CD8-positive, alpha-beta T cell (primary cell): ENCODE measurements at regions of chr10 and their contacts with region 1.

Region 1: DNA sequence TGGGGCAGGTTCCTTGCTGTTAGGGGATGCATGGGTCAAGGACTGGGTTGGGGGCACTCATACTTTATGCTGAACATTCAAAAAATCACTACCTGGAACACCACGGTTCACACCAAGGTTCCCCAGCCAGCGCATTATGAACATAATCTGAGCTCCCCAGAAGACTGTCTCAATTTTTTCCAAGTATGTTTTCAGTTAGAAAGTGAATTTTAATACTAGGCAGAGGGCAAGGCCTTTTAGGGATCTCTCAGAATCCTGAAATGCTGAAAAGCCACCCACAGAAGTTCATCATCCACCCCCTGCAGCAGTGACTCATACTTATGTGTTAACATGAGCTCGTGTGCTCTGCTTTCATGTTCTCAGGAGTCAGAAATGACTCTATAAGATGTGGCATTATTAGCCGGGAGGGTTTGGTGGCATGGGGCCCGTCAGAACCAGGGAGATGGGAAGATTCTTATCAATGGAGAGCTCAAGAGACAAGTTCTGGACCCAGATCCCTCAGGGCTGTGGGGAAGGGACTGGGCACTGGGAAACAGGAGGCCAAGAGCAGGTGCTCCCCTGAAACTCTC is 185.2 kb upstream of the ITGB1 start:
- DNase-seq: peak in 6 of 9 experiments; percentile 21 to 65 (median 42)
- ATAC-seq: peak; percentile 9
- H3K4me3 ChIP-seq: no peak overlapping the region
- H3K4me3 Mint-ChIP-seq: no peak overlapping the region
- H3K27ac ChIP-seq: no peak overlapping the region
- H3K27ac Mint-ChIP-seq: peak overlapping the region; percentile 55
- H3K4me1 ChIP-seq: peaks cover 33% of the 10 kb centered on the region
- H3K4me1 Mint-ChIP-seq: peaks cover 49% of the 10 kb centered on the region
- H3K27me3 ChIP-seq: no peaks in the 10 kb centered on the region
- H3K27me3 Mint-ChIP-seq: no peaks in the 10 kb centered on the region
- CTCF ChIP-seq: no peak

Region 2: DNA sequence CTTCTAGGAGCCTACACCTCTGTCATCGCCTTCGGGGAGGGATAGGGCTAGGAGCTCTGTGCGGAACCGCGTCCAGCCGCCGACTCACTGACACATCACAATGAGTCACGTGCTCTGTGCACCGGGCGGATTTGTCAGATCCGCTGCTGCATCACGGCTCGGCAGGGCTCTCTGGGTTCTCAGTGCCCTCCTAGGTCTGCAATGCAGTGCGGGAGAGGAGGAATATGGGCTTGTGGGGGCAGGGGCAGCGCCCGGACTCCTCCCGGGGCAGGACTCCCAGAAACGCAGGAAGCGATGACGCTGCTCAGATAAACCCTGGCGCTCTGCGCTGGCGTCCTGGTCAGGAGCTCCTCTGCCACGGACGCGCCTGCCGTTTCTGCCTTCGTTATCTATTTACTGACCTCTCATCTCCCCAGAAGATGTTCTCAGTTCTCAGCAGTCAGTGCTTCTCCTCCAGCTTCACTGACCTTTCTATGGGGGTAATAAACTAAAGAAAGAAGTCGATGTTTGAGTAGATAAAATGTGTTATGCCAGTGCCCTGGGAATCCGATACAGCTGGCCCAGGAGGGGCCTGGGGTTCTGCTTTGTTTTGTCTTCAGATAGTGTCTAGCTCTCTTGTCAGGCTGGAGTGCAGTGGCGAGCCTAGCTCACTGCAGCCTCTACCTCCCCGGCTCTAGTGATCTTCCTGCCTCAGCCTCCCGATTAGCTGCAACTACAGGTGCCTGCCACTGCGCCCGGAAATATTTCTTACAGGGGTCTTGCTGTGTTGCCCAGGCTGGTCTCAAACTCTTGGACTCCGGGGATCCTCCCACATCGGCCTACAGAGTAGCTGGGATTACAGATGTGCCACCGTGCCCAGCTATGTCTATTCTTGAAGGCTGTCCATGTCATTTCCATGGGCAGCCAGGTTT is 162.4 kb before region 1 on chr10:
- CTCF ChIA-PET with region 1: no interaction called
- POLR2A ChIA-PET with region 1: interaction called, 4 read pairs
- intact Hi-C with region 1: loop called in 1 of 2 experiments (anchors 5 kb)
- DNase-seq: peak; percentile 61 to 91 (median 85)
- ATAC-seq: peak; percentile 90
- H3K4me3 ChIP-seq: peak overlapping the region; percentile 52 to 66
- H3K4me3 Mint-ChIP-seq: peak overlapping the region; percentile 96
- H3K27ac ChIP-seq: peak overlapping the region; percentile 68 to 94
- H3K27ac Mint-ChIP-seq: peak overlapping the region; percentile 97
- H3K4me1 ChIP-seq: peaks cover 25% of the 10 kb centered on the region
- H3K4me1 Mint-ChIP-seq: peaks cover 34% of the 10 kb centered on the region
- H3K27me3 ChIP-seq: no peaks in the 10 kb centered on the region
- H3K27me3 Mint-ChIP-seq: no peaks in the 10 kb centered on the region
- CTCF ChIP-seq: no peak

Region 3: DNA sequence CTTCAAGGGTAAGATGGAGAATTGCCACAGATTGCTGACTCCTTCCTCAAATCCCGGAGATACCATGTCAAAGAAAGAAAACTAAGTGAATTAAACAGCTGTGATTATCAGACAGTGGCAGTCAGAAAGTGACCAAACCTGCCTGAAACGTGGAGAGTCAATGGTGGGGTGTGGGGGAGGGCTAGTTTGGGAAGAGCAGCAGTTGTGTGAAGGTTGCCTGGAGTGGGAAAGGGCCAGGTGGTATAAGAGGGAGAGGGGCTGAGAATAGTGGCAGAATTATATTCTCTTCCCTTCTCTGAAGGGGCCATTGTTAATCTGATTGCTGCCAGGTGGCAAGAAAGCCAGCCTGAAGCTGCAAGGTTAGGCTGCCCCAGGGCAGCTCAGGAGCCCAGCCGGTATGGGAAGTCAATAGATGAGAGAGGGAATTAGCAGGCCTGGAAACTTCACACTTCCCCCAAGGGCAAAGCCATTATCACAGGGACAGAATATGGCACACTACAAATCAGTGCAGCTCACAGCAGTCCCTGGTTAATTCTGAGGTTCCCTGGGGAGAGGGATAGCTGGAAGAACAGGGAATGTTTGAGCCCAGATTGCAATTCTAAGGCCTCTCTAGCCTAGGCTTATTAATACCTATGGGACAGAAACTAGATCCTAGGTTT is 101.3 kb before region 1 on chr10:
- CTCF ChIA-PET with region 1: no interaction called
- POLR2A ChIA-PET with region 1: no interaction called
- intact Hi-C with region 1: no loop called
- DNase-seq: no peak
- ATAC-seq: no peak
- H3K4me3 ChIP-seq: no peak overlapping the region
- H3K4me3 Mint-ChIP-seq: no peak overlapping the region
- H3K27ac ChIP-seq: no peak overlapping the region
- H3K27ac Mint-ChIP-seq: no peak overlapping the region
- H3K4me1 ChIP-seq: no peaks in the 10 kb centered on the region
- H3K4me1 Mint-ChIP-seq: no peaks in the 10 kb centered on the region
- H3K27me3 ChIP-seq: no peaks in the 10 kb centered on the region
- H3K27me3 Mint-ChIP-seq: no peaks in the 10 kb centered on the region
- CTCF ChIP-seq: no peak

Region 4: DNA sequence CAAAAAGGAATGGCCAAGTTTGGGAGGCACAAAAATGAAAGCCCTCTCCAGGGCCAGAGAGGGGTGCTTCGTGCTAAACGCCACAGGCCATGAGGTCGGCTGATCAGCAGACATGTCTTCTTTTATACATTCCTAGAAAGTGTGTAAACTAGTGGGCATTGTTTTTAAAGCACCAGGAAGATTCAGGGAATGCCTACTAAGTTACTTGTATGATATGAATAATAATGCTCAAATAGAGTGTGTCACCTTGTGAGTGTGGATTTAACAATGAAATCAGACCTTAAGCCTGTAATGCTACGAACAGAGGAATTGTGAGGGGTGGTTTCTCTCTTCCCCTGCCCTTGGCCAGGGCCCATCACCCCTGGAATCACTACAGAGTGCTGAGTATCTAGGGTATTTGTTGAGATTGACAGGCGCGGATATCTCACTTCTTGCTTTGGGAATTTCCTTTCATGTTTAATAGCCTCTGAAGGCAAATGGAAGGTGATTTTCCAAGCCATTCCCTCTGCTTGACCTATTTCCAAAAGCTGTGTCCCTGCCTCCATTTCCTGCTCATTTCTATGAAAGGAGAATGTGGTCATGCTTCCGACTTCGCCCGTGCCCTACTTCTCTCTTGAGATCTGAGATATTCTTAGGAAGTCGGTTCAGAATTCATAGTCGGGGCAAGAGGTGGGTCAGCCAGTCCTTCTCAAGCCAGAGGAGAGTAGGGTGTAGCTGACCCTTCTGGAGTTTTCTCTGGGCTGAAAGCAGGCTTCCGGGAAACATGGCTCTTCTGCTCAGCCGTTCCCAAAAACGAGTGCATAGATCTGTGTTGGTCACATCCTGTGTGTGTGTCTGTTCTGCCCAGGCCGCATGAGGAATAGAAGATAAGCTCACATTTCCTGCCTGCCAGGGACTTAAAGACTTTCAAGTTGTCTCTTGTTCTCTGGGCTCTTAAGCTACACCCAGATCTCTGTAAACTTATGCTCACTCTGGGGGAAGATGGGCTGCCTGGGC is 17.4 kb before region 1 on chr10:
- CTCF ChIA-PET with region 1: interaction called, 5 read pairs
- POLR2A ChIA-PET with region 1: interaction called, 24 read pairs
- intact Hi-C with region 1: loop called in 1 of 2 experiments (anchors 1 kb)
- DNase-seq: peak in 6 of 9 experiments; percentile 29 to 78 (median 54)
- ATAC-seq: peak; percentile 74
- H3K4me3 ChIP-seq: no peak overlapping the region
- H3K4me3 Mint-ChIP-seq: no peak overlapping the region
- H3K27ac ChIP-seq: peak overlapping the region; percentile 50 to 81
- H3K27ac Mint-ChIP-seq: peak overlapping the region; percentile 88
- H3K4me1 ChIP-seq: peaks cover 34% of the 10 kb centered on the region
- H3K4me1 Mint-ChIP-seq: peaks cover 63% of the 10 kb centered on the region
- H3K27me3 ChIP-seq: no peaks in the 10 kb centered on the region
- H3K27me3 Mint-ChIP-seq: no peaks in the 10 kb centered on the region
- CTCF ChIP-seq: no peak